ENCODE measurements at regions of chr17 and their contacts with region 1.

Region 1: DNA sequence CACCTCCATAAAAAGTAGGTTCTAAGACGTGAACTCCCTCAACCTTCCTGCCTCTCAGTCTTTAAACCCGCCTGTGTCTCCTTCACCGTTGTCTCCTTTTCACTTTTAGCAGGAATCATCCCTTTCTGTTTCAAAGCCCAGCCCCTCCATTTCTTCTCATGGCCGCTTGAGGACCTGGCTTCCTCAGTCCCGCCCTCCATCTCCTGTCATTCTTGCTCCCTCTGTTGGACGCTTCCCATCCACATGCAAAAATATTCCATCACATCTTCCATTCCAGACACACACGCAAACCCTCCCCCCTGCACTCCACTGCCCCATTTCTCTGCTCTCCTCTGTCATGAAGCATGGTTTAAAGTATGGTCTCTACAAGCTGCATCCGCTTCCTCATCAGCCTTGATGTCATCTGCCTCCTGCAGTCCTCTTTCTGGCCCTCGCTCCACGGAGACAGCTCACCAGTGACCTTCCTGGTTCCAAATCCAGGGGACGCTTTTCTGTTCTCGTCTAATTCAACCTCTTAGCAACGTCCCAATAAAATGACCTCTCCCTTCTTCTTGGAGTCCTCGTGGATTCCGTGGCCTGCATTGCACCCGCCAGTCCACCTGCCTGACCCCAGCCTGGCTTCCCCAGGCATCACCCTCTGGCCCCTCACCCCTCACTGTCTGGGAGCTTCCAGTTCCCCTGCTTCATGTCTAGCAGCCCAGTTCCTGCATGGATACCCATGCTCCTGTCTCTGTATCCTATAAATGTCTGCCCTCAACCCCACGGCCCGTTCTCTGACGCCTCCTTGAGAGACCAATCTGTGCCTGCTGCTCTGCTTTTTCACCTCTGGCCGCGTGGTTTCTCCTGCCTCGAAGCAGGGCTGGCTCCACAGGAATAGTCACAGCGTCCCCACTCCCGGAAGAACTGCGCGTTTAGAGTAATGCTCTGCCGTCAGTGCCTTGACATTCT is 26.2 kb downstream of the ANKRD40 start:
- DNase-seq: peak; percentile 94
- H3K4me3 ChIP-seq: no peak overlapping the region
- H3K27ac ChIP-seq: peak overlapping the region in 1 of 2 experiments; percentile 7; a peak in 1 of 4 replicates
- H3K4me1 ChIP-seq: peaks cover 11 to 14% of the 10 kb centered on the region in 2 experiments; a peak in 3 of 4 replicates
- H3K27me3 ChIP-seq: no peaks in the 10 kb centered on the region
- CTCF ChIP-seq: peak; percentile 88
- EP300 ChIP-seq: no peak; a peak in 1 of 4 replicates
- RAD21 ChIP-seq: peak; percentile 97

Region 2: GRCh38 chr17:50620858-50621257 is 60.7 kb before region 1 on chr17:
- CTCF ChIA-PET with region 1: interaction called, 799 read pairs
- POLR2A ChIA-PET with region 1: no interaction called
- DNase-seq: peak; percentile 74
- H3K4me3 ChIP-seq: no peak overlapping the region
- H3K27ac ChIP-seq: no peak overlapping the region
- H3K4me1 ChIP-seq: peaks cover 6 to 25% of the 10 kb centered on the region in 2 experiments; a peak in 2 of 4 replicates
- H3K27me3 ChIP-seq: no peaks in the 10 kb centered on the region
- CTCF ChIP-seq: peak; percentile 38; the same call in 1 of the 2 replicates
- EP300 ChIP-seq: no peak
- RAD21 ChIP-seq: peak; percentile 13

Region 3: DNA sequence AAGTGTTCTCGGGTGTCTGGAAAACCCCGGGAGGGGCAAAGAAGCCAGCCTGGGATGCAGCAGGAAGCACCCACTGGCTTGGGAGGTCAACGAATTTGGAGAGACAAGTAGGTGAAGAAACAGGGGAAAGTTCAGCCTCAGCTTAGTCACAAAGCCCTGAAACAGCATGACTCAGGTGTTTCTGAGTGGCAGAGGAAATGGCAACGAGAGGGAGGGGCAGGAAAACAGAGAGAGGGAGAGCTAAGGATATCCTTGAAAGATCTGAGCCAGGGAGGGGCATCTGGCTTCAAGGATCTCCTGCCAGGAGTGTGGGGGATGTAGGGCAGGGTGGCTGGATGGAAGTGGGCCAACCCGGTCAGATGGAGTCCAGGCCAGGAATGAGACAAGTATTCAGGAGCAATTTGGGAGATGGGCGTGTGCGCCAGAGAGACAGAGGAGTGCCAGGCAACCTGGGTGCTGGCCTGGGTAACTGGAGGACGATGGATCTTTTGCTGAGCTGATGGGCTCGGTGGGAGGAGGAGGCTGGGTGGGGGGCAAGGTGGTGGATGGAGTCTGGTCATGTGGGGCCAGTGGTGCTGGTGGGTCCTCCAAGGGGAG is 19.6 kb before region 1 on chr17:
- CTCF ChIA-PET with region 1: interaction called, 20 read pairs
- POLR2A ChIA-PET with region 1: no interaction called
- DNase-seq: peak; percentile 73
- H3K4me3 ChIP-seq: no peak overlapping the region
- H3K27ac ChIP-seq: peak overlapping the region; percentile 77
- H3K4me1 ChIP-seq: peaks cover 39 to 44% of the 10 kb centered on the region in 2 experiments
- H3K27me3 ChIP-seq: no peaks in the 10 kb centered on the region
- CTCF ChIP-seq: no peak
- EP300 ChIP-seq: peak; percentile 40 to 93; a peak in 1 of 4 replicates
- RAD21 ChIP-seq: no peak

Region 4: DNA sequence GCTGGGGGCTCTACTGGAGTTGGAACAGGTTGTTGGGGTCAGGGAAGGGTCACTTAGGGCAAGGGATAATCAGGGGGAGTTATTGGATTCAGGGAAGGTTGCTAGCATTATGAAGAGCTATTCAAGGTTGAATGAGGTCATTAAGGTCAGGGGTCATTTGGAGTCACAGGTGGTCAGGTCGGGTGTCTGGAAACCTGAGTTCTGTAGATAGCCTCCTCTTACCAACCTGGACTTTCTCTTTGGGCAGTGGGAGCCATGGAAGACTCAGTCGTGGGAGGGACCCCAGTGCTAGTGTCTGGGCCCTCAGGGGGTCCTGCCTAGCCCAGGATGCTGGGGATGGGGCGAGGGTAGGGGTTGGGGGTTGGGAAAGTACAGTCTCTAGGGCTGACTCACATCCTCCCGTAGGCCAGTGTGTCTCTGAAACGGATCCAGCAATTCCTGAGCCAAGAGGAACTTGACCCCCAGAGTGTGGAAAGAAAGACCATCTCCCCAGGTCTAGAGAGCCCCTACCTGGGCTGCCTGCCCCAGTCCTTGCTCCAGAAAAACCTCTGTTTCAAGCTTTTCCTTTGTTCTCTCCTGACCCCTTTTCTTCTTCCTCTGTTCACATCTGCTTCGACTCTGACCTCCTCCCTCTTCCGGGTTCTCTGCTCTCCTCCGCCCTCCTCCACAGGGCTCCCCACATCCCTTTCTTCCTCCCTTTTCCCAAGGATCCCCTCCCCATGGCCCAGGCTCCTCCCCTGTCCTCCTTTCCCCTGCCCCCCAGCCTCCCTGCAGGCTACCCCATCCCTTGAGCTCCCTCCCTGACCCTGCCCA is 13.3 kb before region 1 on chr17:
- CTCF ChIA-PET with region 1: interaction called, 20 read pairs
- POLR2A ChIA-PET with region 1: no interaction called
- DNase-seq: no peak
- H3K4me3 ChIP-seq: no peak overlapping the region
- H3K27ac ChIP-seq: peak overlapping the region in 1 of 2 experiments; percentile 42; a peak in 2 of 4 replicates
- H3K4me1 ChIP-seq: peaks cover 0 to 31% of the 10 kb centered on the region in 2 experiments; a peak in 3 of 4 replicates
- H3K27me3 ChIP-seq: no peaks in the 10 kb centered on the region
- CTCF ChIP-seq: no peak
- EP300 ChIP-seq: peak in 1 of 2 experiments; percentile 42; a peak in 1 of 4 replicates
- RAD21 ChIP-seq: no peak

Region 5: GRCh38 chr17:50697663-50698274 is 16.2 kb after region 1 on chr17:
- CTCF ChIA-PET with region 1: interaction called, 108 read pairs
- POLR2A ChIA-PET with region 1: no interaction called
- DNase-seq: no peak
- H3K4me3 ChIP-seq: no peak overlapping the region
- H3K27ac ChIP-seq: no peak overlapping the region
- H3K4me1 ChIP-seq: peaks cover 10 to 25% of the 10 kb centered on the region in 2 experiments
- H3K27me3 ChIP-seq: no peaks in the 10 kb centered on the region
- CTCF ChIP-seq: no peak; the same call in 1 of the 2 replicates
- EP300 ChIP-seq: no peak
- RAD21 ChIP-seq: peak; percentile 31

Region 6: DNA sequence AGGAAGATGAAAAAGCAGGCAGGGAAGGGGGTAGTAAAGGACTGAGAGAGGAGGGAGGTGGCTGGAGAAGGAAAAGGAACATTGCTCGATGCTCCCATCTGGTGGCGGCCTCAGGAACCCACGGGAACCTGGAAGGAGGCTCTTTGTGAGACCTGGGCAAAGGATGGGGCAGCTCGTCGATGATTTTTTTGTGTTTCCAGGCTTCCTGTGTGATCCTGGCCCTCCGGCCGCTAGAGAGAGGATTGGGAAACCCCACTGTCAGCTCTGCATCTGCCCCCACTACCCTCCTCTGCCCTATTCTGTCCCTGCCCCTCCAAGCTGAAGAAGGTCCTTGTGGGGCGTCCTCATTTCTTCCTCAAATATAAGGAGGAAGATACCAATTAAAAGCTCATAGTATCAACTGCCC is 160.4 kb after region 1 on chr17:
- CTCF ChIA-PET with region 1: no interaction called
- POLR2A ChIA-PET with region 1: no interaction called
- DNase-seq: peak; percentile 97
- H3K4me3 ChIP-seq: no peak overlapping the region; a peak in 1 of 4 replicates
- H3K27ac ChIP-seq: no peak overlapping the region
- H3K4me1 ChIP-seq: peaks cover 3 to 5% of the 10 kb centered on the region in 2 experiments; a peak in 2 of 4 replicates
- H3K27me3 ChIP-seq: no peaks in the 10 kb centered on the region
- CTCF ChIP-seq: peak; percentile 94
- EP300 ChIP-seq: no peak
- RAD21 ChIP-seq: peak; percentile 93

Measured in SK-N-SH (cell line).